OCI-LY7 (cell line): ENCODE measurements at regions of chr5 and their contacts with region 1.

Region 1: DNA sequence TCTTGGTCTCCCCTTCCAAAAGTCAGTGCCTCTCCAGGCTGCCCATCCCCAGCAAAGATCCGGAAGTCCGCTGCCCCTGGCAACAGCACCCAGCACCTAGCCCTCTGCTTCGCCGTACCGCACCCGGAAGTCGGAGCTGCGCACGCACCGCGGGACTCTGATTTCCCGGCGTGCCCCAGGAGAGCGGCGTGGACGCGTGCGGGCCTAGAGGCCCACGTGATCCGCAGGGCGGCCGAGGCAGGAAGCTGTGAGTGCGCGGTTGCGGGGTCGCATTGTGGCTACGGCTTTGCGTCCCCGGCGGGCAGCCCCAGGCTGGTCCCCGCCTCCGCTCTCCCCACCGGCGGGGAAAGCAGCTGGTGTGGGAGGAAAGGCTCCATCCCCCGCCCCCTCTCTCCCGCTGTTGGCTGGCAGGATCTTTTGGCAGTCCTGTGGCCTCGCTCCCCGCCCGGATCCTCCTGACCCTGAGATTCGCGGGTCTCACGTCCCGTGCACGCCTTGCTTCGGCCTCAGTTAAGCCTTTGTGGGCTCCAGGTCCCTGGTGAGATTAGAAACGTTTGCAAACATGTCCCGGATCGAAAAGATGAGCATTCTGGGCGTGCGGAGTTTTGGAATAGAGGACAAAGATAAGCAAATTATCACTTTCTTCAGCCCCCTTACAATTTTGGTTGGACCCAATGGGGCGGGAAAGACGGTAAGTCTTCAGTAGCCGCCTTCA is at the start of gene RAD50:
- DNase-seq: peak; percentile 97
- H3K4me3 ChIP-seq: peak within 1 kb of the TSS; percentile 81
- H3K27ac ChIP-seq: peak within 1 kb of the TSS; percentile 74
- H3K4me1 ChIP-seq: peaks cover 20% of the 10 kb centered on the region
- CTCF ChIP-seq: no peak
- total RNA-seq, gene RAD50: 24.0 and 34.1 TPM in 2 replicates

Region 2: GRCh38 chr5:132456296-132457001 is 100.5 kb before region 1 on chr5:
- CTCF ChIA-PET with region 1: no interaction called
- POLR2A ChIA-PET with region 1: no interaction called
- intact Hi-C with region 1: no loop called
- DNase-seq: peak; percentile 80
- H3K4me3 ChIP-seq: peak overlapping the region; percentile 47
- H3K27ac ChIP-seq: peak overlapping the region; percentile 82
- H3K4me1 ChIP-seq: peaks cover 70% of the 10 kb centered on the region
- CTCF ChIP-seq: no peak

Region 3: DNA sequence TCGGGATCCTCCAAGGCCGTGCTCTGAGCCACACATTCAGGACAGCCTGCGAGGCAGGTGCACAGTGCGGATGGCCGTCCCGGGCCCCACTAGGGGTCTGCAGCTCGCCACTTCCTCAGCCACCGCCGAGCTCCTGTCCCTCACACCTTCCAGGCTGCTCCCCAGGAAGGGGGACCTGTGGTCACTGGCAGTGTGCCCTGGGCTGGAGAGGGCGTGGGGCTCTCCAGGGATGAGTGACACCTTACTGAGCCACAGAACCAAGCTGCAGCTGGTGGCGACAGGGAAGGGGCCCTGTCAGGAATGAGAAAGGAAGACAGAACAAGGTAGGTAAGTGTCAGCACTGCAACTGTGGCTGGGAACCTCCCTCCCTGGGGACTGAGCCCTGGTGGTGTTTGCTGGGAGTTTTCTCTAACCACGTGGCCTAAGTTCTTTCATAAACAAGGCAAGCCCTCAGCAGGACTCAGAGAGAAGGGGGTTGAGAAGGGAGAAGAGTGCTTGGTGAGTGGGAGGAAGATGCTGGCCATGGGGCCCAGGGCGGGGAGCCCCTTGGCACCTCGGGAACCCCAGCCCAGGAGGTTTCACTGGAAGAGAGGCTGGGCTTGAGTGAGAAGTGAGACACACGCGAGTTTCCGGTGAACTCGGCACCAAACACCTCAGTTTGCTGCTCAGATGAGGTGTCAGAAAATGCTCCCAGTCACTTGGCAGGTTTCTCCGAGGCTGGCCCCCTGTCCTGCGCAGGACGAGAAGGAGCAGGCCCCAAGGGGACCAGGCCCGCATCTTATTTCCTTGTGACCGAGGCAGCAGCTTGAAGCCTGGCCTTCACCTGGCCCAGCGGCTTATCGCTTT is 106.2 kb after region 1 on chr5:
- CTCF ChIA-PET with region 1: no interaction called
- POLR2A ChIA-PET with region 1: no interaction called
- intact Hi-C with region 1: no loop called
- DNase-seq: peak; percentile 19
- H3K4me3 ChIP-seq: no peak overlapping the region
- H3K27ac ChIP-seq: no peak overlapping the region
- H3K4me1 ChIP-seq: no peaks in the 10 kb centered on the region
- CTCF ChIP-seq: no peak

Region 4: DNA sequence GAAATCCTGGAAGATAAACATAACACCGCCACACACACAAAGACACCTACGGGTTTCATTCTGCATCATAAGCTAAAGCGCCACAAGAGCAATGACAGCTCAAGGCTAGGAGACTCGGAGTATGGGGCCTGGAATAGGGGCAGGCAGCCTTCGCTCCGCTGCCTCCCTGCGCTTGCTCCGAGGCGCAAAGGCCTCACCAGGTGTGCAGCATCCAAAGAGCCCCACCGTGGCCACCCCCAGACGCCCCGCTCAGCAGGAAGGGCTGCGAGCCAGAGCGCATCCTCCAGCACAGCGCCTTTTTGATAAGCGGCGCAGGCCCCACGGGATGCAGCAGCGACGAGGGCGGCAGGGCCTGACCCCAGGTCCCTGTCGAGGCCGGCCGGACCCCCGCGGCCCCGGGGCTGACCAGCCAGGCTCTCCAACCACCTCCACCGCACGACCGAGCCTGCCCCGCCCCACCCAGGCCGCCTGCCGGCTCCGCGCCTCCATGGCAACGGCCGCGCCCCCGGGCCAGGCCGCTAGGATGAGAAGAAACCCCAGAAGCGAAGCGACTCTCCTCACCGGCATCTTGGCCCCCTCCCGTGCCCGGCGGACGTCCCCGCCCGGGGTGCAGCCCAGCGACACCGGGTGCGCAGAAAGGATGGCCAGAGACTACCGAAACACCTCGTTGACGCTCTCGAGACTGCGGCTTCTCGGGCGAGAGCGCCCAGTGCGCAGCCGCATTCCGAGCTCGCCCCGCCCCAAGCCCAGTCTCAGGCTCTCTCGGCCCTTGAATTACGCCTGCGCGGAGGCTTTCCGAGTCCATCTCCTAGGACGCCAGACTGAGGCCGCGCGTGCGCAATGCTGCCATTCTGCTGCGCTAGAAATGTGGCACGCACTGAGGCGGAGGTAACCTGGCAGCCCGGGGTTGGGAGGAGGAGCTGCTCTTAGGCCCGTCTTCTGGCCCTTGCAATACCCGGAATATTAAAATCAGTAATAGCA is 180.2 kb after region 1 on chr5 and contains the start of gene KIF3A:
- CTCF ChIA-PET with region 1: no interaction called
- POLR2A ChIA-PET with region 1: no interaction called
- intact Hi-C with region 1: loop called (anchors 5 kb)
- DNase-seq: peak; percentile 98
- H3K4me3 ChIP-seq: peak within 1 kb of the TSS; percentile 74
- H3K27ac ChIP-seq: no peak within 1 kb of the TSS
- H3K4me1 ChIP-seq: peaks cover 18% of the 10 kb centered on the region
- CTCF ChIP-seq: no peak
- total RNA-seq, gene KIF3A: 6.7 and 8.7 TPM in 2 replicates